Activated naive CD4-positive, alpha-beta T cell treated with anti-CD3 and anti-CD28 coated beads for 36 hours (primary cell): ENCODE measurements at regions of chr19 and their contacts with region 1.

Region 1: DNA sequence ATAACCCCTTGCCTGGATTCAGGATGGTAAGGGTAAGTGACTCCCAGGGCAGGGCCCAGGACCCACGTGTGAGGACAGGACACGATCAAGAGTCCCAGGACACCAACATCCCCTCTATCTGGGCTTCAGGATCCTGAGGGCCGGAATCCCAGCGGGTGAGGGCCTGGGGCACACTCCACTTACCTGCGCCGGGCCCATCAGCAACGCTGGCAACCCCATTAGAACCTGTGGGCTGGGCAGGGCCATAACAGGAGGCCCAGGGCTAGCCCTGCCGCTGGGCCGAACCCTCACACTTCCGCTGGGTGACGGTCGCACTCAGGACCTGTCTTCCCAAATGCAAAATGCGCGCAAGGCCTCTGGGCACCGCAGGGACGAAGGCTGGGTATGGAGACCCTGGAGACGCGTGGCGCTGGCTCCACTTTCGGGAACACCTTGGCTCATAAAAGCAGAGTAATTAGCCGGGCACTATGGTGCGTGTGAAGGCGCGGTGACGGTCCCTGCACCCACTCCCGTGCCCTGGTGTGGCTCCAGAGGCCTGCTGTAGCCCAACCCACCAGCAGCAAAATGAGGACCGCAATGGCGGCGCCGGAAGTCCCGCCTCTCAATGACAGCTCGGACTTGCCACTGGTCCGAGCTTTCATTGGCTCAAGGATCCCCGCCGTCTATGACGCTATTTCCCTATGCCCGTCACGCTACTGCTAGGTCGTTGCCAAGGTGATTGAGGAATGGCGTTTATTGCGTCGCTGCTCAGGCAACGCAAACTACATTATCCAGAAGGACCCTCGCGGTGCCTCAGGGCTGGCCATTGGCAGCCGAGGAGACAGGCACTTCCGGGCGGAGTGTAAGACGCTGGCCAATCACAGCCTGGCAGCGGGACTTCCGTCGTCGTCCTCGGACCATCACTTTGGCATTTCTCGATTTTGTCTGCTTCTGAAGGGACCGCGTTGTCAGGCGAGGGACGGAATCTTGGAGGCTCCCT is at the start of gene ZNF132:
- DNase-seq: peak; percentile 98
- H3K4me3 Mint-ChIP-seq: peak within 1 kb of the TSS; percentile 95
- H3K27ac Mint-ChIP-seq: peak within 1 kb of the TSS; percentile 88
- H3K4me1 Mint-ChIP-seq: peaks cover 18% of the 10 kb centered on the region
- H3K27me3 Mint-ChIP-seq: no peaks in the 10 kb centered on the region
- total RNA-seq, gene ZNF132: 2.8 to 2.9 TPM

Region 2: GRCh38 chr19:58362272-58362994 is 77.4 kb before region 1 on chr19 and contains the start of gene ZNF497:
- CTCF ChIA-PET with region 1: interaction called, 3 read pairs
- intact Hi-C with region 1: loop called (anchors 5 kb)
- DNase-seq: peak; percentile 97
- H3K4me3 Mint-ChIP-seq: peak within 1 kb of the TSS; percentile 93
- H3K27ac Mint-ChIP-seq: peak within 1 kb of the TSS; percentile 87
- H3K4me1 Mint-ChIP-seq: peaks cover 8% of the 10 kb centered on the region
- H3K27me3 Mint-ChIP-seq: no peaks in the 10 kb centered on the region
- total RNA-seq, gene ZNF497: 0.40 to 0.41 TPM

Region 3: GRCh38 chr19:58395220-58396029 is 44.4 kb before region 1 on chr19 and contains the start of gene RNF225:
- CTCF ChIA-PET with region 1: no interaction called
- intact Hi-C with region 1: no loop called
- DNase-seq: no peak
- H3K4me3 Mint-ChIP-seq: no peak within 1 kb of the TSS
- H3K27ac Mint-ChIP-seq: no peak within 1 kb of the TSS
- H3K4me1 Mint-ChIP-seq: peaks cover 26% of the 10 kb centered on the region
- H3K27me3 Mint-ChIP-seq: peaks cover 11% of the 10 kb centered on the region
- total RNA-seq, gene RNF225: 0.32 TPM in 1 of 2 experiments, not detected in the other

Region 4: DNA sequence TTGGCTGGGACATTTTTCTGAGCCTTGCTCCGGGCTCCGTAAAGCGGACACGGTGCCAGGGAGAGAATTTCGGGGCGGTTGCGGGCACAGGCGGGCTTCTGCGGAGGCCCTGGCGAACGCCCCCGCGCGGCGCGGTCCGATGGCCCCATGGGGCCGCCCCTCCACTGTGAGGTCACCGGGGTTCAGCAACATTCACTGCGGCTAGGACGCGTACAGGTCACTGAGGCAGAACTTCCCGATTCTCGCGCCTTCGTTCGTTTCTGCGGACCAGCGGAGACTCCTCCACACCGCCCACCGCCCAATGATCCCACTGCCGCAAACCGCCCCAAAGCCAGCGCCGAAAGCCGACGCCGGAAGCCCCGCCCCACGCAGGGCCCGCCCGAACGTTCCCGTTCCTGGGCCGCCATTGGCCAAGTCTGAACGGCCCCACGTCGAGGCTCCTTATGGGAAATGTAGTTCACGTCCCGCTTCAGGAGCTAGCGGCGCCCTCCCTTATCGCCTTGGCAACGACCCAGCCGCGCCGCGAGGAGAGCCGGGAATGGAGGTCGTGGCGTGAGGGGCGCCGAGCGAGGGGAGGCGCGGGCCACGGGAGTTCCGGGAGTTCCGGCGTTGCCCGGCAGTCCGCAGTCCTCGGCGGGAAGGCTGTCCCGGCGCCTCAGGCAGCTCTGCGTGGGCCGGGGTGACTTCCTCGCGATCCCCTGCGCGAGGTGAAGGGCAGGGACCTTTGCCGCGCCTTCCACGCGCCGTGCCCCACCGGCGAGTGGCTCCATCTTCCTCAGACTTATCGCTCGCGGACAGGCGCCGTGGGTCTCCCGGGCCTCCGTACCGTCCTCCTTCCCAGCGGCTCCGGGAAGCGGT is 31.5 kb before region 1 on chr19 and contains the start of gene ZNF584:
- CTCF ChIA-PET with region 1: no interaction called
- intact Hi-C with region 1: loop called (anchors 1 kb)
- DNase-seq: peak; percentile 97
- H3K4me3 Mint-ChIP-seq: peak within 1 kb of the TSS; percentile 89
- H3K27ac Mint-ChIP-seq: peak within 1 kb of the TSS; percentile 93
- H3K4me1 Mint-ChIP-seq: peaks cover 30% of the 10 kb centered on the region
- H3K27me3 Mint-ChIP-seq: no peaks in the 10 kb centered on the region
- total RNA-seq, gene ZNF584: 3.4 to 4.8 TPM

Region 5: DNA sequence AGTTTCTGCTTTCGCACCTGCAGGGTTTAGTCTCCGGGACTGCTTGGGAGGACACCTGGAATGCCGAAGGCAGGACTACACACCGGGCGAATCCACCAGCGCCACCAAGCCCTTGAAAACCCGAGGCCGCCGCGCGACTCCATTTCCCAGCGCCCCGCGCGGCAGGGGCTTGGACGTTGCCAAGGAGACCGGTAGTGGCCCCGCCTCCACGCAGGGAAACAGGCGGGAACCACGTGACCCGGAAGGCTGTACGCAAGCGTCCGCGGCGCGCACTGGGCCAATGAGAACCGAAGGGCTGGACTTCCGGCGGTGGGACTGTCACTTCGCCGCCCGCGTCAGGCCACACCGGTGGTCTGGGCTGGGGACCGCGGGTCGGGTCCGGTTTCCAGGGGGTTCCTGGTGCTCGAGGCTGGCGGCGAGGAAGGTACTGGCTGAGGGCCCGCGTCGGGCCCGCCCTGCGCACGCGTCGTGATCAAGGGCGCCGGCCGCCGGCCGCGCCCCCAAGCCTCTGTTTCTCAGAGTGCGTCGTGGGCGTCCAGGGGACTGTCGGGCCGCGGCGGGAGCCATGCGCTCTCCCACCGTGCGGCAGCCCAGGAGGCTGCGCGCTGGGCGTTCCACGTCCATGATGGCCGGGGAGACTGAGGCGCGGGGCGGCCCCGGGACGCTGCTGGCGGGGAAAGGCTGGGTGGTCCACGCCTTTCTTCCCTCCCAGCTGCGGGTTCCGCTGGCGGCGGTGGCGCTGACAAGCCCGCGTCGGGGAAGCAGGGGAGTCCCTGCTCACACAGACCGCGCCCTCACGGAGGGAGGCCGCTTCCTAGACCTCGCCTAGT is 27.1 kb after region 1 on chr19 and contains the start of gene ZNF324:
- CTCF ChIA-PET with region 1: no interaction called
- intact Hi-C with region 1: loop called (anchors 1 kb)
- DNase-seq: peak; percentile 99
- H3K4me3 Mint-ChIP-seq: peak within 1 kb of the TSS; percentile 83
- H3K27ac Mint-ChIP-seq: no peak within 1 kb of the TSS
- H3K4me1 Mint-ChIP-seq: peaks cover 20% of the 10 kb centered on the region
- H3K27me3 Mint-ChIP-seq: peaks cover 2% of the 10 kb centered on the region
- total RNA-seq, gene ZNF324: 2.4 to 3.0 TPM

Region 6: GRCh38 chr19:58519355-58520256 is 79.7 kb after region 1 on chr19 and contains the start of gene ZBTB45:
- CTCF ChIA-PET with region 1: no interaction called
- intact Hi-C with region 1: no loop called
- DNase-seq: peak; percentile 94
- H3K4me3 Mint-ChIP-seq: peak within 1 kb of the TSS; percentile 93
- H3K27ac Mint-ChIP-seq: peak within 1 kb of the TSS; percentile 98
- H3K4me1 Mint-ChIP-seq: peaks cover 38% of the 10 kb centered on the region
- H3K27me3 Mint-ChIP-seq: no peaks in the 10 kb centered on the region
- total RNA-seq, gene ZBTB45: 5.5 to 6.0 TPM

Region 7: GRCh38 chr19:58572818-58573657 is 133.2 kb after region 1 on chr19 and contains the start of gene MZF1:
- CTCF ChIA-PET with region 1: no interaction called
- intact Hi-C with region 1: loop called (anchors 1 kb)
- DNase-seq: peak; percentile 100
- H3K4me3 Mint-ChIP-seq: peak within 1 kb of the TSS; percentile 96
- H3K27ac Mint-ChIP-seq: peak within 1 kb of the TSS; percentile 99
- H3K4me1 Mint-ChIP-seq: peaks cover 39% of the 10 kb centered on the region
- H3K27me3 Mint-ChIP-seq: no peaks in the 10 kb centered on the region
- total RNA-seq, gene MZF1: 13.3 to 13.4 TPM